Dendritic cell treated with granulocyte-macrophage colony-stimulating factor and Interleukin-4, amounts not matched to agents 40 ng/mL and 50 ng/mL, for 4 days (primary cell): ENCODE measurements at regions of chr20 and their contacts with region 1.

Region 1: GRCh38 chr20:34538671-34539123 is 19.8 kb upstream of the MAP1LC3A start:
- H3K4me3 Mint-ChIP-seq: no peak overlapping the region
- H3K27ac Mint-ChIP-seq: no peak overlapping the region
- H3K4me1 Mint-ChIP-seq: no peaks in the 10 kb centered on the region
- H3K27me3 Mint-ChIP-seq: no peaks in the 10 kb centered on the region

Region 2: DNA sequence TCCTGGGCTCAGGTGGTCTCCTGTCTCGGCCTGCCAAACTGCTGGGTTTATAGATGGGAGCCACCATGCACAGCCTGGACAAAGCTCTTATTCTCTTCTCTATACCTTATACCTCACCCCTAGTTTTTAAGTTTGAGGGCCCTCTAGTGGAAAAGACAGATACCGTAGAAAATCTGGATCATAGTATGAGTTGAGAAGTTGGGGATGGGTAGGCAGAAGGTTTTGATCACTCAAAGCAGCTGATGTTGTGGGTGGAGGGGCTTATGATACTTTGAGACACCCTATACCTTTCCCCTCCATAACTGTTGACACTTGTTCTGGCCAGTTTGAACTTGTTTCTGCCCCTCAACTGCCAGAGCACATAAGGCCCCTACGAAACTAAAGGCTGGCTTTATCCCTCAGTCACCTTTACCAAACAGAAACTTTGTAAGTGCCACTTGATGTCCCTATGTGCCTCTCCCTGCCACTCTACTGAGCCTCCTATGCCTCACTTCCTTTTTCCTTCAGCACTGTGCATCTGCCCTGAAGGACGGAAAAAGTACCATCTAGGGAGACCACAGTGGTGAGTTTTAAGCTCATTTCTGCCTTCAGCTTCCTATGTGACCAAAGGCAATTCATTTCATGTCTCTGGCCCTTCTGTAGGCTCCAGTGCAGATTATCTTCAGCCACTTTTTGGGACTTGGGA is 516.4 kb before region 1 on chr20:
- intact Hi-C with region 1: no loop called
- H3K4me3 Mint-ChIP-seq: no peak overlapping the region
- H3K27ac Mint-ChIP-seq: peak overlapping the region; percentile 26
- H3K4me1 Mint-ChIP-seq: peaks cover 85% of the 10 kb centered on the region
- H3K27me3 Mint-ChIP-seq: no peaks in the 10 kb centered on the region

Region 3: DNA sequence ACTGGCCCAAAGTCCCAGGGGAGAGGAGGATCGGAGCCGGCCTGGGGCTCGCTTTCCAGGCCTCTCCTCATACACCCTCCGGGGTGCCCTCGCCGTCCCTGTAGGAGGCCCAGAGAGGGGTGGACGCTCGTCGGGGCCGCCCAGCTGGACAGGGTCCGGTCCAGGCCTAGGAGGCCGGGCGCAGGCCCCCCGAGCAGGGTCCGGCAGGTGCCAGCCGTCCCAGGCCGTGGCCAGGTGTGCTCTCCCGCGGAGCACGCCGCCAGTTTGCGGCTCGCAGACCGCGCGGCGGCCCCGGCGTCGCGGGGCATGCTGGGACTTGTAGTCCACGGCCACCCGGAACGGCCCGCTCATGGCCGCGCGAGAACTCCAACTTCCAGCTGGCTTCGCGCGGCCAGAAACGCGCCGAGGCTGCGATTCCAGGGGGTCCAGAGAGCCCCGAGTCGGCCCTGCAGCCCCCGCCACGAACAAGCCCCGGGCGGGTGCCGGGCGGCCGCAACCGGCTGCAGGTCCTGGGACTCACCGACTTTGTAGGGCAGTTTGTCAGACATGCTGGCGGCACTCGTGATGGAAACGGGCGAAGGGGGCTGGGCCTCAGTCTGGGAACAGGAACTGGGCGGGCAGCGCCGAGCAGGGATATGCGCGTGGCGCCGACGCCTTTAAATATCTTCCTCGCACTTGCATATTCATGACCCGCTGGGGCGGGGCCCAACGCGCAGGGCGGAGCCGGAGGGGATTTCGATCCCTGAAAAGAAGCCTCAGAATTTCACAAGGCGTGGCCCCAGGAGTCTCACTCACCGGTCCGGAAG is 235.8 kb before region 1 on chr20 and contains the start of gene AHCY:
- intact Hi-C with region 1: no loop called
- H3K4me3 Mint-ChIP-seq: no peak within 1 kb of the TSS
- H3K27ac Mint-ChIP-seq: no peak within 1 kb of the TSS
- H3K4me1 Mint-ChIP-seq: peaks cover 7% of the 10 kb centered on the region
- H3K27me3 Mint-ChIP-seq: no peaks in the 10 kb centered on the region

Region 4: GRCh38 chr20:34493646-34494045 is 45.1 kb before region 1 on chr20:
- intact Hi-C with region 1: no loop called
- H3K4me3 Mint-ChIP-seq: no peak overlapping the region
- H3K27ac Mint-ChIP-seq: no peak overlapping the region
- H3K4me1 Mint-ChIP-seq: no peaks in the 10 kb centered on the region
- H3K27me3 Mint-ChIP-seq: no peaks in the 10 kb centered on the region

Region 5: GRCh38 chr20:34768096-34768495 is 229.4 kb after region 1 on chr20:
- intact Hi-C with region 1: loop called (anchors 5 kb)
- H3K4me3 Mint-ChIP-seq: no peak overlapping the region
- H3K27ac Mint-ChIP-seq: no peak overlapping the region
- H3K4me1 Mint-ChIP-seq: no peaks in the 10 kb centered on the region
- H3K27me3 Mint-ChIP-seq: no peaks in the 10 kb centered on the region